HCT116 (cell line): ENCODE measurements at regions of chr19 and their contacts with region 1.

Region 1: DNA sequence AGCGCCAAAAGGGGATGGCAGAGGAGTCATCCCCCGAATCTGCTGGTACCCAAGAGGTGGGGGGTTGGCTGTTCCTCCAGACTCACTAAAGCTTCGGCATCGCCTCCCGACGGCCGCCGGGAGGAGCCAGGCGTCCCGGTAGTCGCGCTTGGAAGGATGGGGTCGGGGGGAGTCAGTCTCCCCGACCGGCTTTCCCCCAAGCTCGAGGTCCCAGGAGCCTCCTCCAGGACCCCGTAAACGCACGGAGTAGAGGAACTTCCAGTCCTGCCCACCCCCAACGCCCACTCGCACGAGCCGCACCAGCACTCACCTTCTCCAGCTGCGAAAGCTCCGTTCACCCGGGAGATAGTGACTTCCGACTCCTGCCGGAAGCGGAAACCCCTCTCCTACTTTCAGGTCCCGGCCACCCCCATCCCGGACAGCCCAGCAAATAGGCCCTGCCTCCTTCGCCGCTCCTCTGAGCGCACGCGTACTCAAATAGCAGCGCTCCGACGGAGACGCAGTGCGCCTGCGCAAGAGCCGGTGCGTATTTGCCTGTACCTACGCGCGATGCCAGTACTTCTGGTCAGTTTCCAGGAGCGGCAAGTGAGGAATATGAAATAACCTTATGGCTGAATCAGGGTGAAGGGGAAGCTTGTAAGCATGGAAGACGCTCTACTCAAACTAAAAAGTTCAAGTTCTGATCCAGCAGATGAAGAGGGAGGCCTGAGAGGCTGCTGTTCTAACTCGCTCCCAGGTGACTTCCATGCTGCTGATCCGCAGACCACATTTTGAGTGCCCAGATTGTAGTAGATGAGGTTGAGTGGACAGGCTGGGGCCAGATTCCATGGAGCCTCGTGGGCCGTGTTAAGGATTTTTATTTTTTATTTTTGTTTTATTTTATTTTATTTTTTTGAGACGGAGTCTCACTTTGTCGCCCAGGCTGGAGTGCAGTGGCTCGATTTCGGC is at the start of gene ELOF1:
- DNase-seq: peak; percentile 97
- ATAC-seq: peak; percentile 94
- H3K4me3 ChIP-seq: peak within 1 kb of the TSS; percentile 85 to 94
- H3K27ac ChIP-seq: peak within 1 kb of the TSS; percentile 57
- H3K4me1 ChIP-seq: peaks cover 0 to 17% of the 10 kb centered on the region in 2 experiments; a peak in 2 of 4 replicates
- H3K27me3 ChIP-seq: no peaks in the 10 kb centered on the region
- CTCF ChIP-seq: peak in 2 of 3 experiments; percentile 7 to 28; a peak in 1 of 6 replicates
- POLR2A ChIP-seq: peak; percentile 92
- RAD21 ChIP-seq: no peak
- total RNA-seq, gene ELOF1: 74.5 TPM

Region 2: DNA sequence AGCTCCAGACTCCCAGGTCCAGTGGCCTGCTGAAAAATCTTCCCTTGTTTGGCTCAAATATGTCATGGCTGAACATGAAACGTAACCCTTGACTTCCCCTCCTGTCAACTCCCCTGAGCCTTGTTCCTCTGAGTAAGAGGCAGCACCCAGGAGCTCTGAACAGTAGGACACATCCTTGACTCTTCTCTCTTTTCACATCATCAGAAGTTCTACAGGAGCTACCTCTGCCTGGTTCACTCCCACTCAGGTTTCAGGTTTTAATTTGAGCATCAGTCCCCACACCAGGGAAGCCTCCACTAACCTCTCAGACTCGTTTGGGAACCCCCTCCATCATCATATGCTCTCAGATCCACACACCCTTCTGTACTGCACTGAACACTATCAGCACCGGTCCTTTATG is 149.3 kb after region 1 on chr19:
- CTCF ChIA-PET with region 1: no interaction called
- POLR2A ChIA-PET with region 1: no interaction called
- RAD21 ChIA-PET with region 1: no interaction called
- intact Hi-C with region 1: no loop called
- DNase-seq: no peak
- ATAC-seq: no peak
- H3K4me3 ChIP-seq: no peak overlapping the region
- H3K27ac ChIP-seq: no peak overlapping the region
- H3K4me1 ChIP-seq: no peaks in the 10 kb centered on the region
- H3K27me3 ChIP-seq: no peaks in the 10 kb centered on the region
- CTCF ChIP-seq: no peak
- POLR2A ChIP-seq: no peak
- RAD21 ChIP-seq: no peak

Region 3: DNA sequence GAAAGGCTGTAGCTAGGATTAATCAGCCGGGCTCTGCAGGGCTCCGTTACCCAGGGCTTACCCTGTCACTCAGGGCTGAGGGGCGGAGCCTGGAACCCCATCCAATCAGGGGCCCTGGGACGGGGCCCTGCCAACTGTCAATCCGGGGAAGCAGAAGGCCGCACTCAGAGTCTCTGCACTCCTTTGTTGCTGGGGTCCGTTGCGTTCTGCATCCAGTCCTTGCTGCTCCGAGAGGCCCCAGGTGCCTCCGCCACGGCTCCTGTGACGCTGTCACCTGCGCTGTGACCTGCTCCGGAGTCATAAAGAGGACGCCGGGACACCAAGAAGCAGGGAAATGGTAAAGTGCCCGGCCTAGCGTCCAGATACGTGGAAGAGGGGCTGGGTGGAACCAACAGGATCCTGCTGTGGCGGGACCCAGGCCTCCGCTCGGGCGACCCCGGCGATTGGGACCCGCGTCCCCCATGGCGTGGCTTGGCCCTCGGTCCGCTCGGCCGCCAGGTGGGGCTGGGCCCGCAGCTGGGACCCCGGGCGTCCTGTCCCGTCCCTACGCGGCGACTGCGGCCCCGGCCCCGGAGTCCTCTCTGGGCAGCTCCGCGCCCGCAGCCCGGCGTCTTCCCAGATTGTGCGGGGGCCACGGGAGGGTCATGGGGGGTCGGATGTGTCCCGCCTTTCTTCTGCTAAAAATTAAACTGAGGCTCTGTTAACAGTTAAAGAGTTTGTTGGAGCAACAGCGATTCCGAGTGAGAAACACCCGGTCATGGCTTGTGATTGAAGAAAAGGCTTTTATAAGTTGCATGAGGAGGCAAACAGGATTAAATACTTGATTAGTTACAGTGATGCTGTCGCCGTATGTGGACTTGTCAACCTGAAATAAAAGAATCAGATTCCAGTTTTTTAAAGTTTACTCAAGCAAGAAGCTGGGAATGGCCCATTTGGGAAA is 239.5 kb after region 1 on chr19 and contains the start of gene ZNF491:
- CTCF ChIA-PET with region 1: no interaction called
- POLR2A ChIA-PET with region 1: no interaction called
- RAD21 ChIA-PET with region 1: no interaction called
- intact Hi-C with region 1: loop called (anchors 5 kb)
- DNase-seq: no peak
- ATAC-seq: no peak
- H3K4me3 ChIP-seq: no peak within 1 kb of the TSS
- H3K27ac ChIP-seq: no peak within 1 kb of the TSS
- H3K4me1 ChIP-seq: no peaks in the 10 kb centered on the region
- H3K27me3 ChIP-seq: no peaks in the 10 kb centered on the region
- CTCF ChIP-seq: no peak
- POLR2A ChIP-seq: no peak
- RAD21 ChIP-seq: no peak
- total RNA-seq, gene ZNF491: not detected